ENCODE measurements at regions of chr3 and their contacts with region 1.

Region 1: GRCh38 chr3:140898340-140899180 is 43.1 kb upstream of the SLC25A36 start:
- DNase-seq: peak; percentile 34
- H3K4me3 ChIP-seq: no peak overlapping the region
- H3K27ac ChIP-seq: no peak overlapping the region
- H3K4me1 ChIP-seq: no peaks in the 10 kb centered on the region
- H3K27me3 ChIP-seq: no peaks in the 10 kb centered on the region
- CTCF ChIP-seq: peak; percentile 25

Region 2: GRCh38 chr3:141105828-141106628 is 207.5 kb after region 1 on chr3:
- intact Hi-C with region 1: loop called (anchors 5 kb)
- DNase-seq: peak; percentile 75
- H3K4me3 ChIP-seq: no peak overlapping the region
- H3K27ac ChIP-seq: no peak overlapping the region
- H3K4me1 ChIP-seq: no peaks in the 10 kb centered on the region
- H3K27me3 ChIP-seq: no peaks in the 10 kb centered on the region
- CTCF ChIP-seq: peak; percentile 51

Region 3: DNA sequence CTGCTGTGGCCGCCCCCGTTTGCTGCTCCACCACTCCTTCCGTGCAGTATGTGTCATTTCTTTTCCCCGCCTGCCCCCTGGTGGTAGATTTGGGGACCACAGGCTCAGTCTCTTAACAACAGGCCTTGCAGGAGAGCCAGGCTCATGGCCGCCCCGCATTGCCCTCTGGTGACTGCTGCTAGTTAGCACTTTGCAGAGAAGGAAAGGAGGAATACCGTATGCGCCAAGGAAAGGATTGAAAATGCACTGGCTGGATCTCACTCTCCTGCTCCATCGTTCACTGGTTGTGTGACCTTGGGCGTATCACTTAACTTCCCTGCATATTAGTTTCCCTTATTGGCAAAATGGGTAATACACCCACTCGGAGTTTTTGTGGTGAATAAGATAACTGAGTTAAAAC is 293.8 kb after region 1 on chr3:
- intact Hi-C with region 1: loop called (anchors 5 kb)
- DNase-seq: peak; percentile 100
- H3K4me3 ChIP-seq: no peak overlapping the region
- H3K27ac ChIP-seq: no peak overlapping the region
- H3K4me1 ChIP-seq: no peaks in the 10 kb centered on the region
- H3K27me3 ChIP-seq: no peaks in the 10 kb centered on the region
- CTCF ChIP-seq: peak; percentile 89